Activated CD4-positive, alpha-beta memory T cell treated with anti-CD3 and anti-CD28 coated beads for 36 hours (primary cell): ENCODE measurements at regions of chr5 and their contacts with region 1.

Region 1: DNA sequence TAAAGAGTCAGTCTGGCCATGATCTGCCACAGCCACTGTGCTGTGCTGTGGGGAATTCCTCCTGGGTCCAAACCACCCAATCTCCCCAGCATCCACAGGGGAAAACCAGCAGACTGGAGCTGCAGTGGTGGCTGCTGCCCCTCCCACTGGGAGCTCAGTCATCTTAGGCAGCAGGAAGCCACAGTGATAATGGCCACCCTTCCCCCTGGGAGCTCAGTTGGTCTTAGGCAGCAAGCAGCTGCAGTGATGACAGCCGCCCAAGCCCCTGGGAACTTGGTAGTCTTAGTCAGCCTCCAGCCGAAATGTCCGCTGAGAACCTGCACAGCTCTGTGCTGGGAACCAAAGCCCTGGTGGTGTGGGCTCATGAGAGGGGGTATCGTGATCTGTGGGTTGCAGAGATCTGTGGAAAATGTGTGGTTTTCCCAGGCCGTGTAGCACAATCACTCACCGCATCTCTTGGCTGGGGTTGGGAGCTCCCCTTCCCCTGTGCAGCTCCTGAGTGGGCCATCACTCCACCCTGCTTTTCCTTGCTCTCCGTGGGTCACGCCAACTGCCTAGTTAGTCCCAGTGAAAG is 38.4 kb upstream of the SMIM15 start:
- DNase-seq: peak; percentile 10
- H3K4me3 Mint-ChIP-seq: no peak overlapping the region
- H3K27ac Mint-ChIP-seq: no peak overlapping the region
- H3K4me1 Mint-ChIP-seq: peaks cover 16% of the 10 kb centered on the region
- H3K27me3 Mint-ChIP-seq: peaks cover 41% of the 10 kb centered on the region

Region 2: GRCh38 chr5:60972231-60972630 is 228.4 kb before region 1 on chr5:
- CTCF ChIA-PET with region 1: no interaction called
- POLR2A ChIA-PET with region 1: no interaction called
- intact Hi-C with region 1: loop called (anchors 1 kb)
- DNase-seq: peak; percentile 73
- H3K4me3 Mint-ChIP-seq: no peak overlapping the region
- H3K27ac Mint-ChIP-seq: no peak overlapping the region
- H3K4me1 Mint-ChIP-seq: peaks cover 14% of the 10 kb centered on the region
- H3K27me3 Mint-ChIP-seq: no peaks in the 10 kb centered on the region

Region 3: DNA sequence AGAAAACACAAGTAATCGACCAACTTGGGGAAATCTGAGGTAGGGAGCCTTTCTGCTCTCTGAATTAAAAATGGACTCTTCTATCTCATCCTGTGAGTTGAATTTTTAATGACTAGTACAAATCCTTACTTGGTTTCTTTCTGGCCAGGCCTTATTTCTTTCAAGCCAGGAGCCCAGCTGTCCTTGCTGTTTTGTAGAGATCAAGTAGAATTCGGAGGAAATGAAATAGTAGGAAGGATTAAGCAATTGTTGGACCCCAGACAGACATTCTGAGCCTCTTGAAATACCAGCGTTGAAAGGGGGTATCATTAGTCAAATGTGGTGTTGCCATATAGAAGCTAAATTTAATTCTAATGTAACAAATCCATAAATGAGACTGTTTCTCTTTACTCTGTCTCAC is 15.3 kb after region 1 on chr5:
- CTCF ChIA-PET with region 1: no interaction called
- POLR2A ChIA-PET with region 1: no interaction called
- intact Hi-C with region 1: no loop called
- DNase-seq: no peak
- H3K4me3 Mint-ChIP-seq: no peak overlapping the region
- H3K27ac Mint-ChIP-seq: no peak overlapping the region
- H3K4me1 Mint-ChIP-seq: no peaks in the 10 kb centered on the region
- H3K27me3 Mint-ChIP-seq: peaks cover 10% of the 10 kb centered on the region

Region 4: DNA sequence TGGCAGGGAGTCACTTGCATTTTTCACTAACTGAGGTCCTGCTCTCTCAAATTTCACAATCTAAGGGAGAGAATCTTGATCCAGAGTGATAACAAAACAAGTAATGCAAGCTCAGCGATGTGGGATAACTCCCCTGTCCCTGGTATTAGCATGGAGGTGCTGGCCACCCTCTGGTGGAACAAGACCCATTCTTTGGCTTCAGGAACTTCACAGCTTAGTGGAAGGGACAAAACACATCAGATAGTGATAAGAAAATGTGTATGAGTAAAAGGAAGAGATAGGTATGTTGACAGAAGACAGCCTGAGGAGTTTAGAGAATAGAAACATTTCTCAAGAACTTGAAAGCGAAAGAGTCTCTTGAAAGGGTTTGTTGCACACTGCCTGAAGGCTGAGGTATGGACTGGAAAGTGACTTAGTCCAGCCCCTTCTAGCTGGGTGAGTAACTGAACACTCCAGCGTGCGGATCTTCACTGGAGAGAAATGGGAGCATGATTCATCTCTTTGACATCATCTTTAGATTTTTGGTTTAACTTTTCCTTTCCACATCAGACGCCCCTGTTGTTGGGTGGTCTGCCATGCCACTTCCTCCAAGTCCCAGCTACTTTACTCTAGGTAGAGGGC is 106.0 kb after region 1 on chr5:
- CTCF ChIA-PET with region 1: no interaction called
- POLR2A ChIA-PET with region 1: interaction called, 7 read pairs
- intact Hi-C with region 1: loop called (anchors 1 kb)
- DNase-seq: peak; percentile 62
- H3K4me3 Mint-ChIP-seq: no peak overlapping the region
- H3K27ac Mint-ChIP-seq: peak overlapping the region; percentile 64
- H3K4me1 Mint-ChIP-seq: peaks cover 26% of the 10 kb centered on the region
- H3K27me3 Mint-ChIP-seq: peaks cover 16% of the 10 kb centered on the region

Region 5: GRCh38 chr5:61408476-61409168 is 208.0 kb after region 1 on chr5:
- CTCF ChIA-PET with region 1: no interaction called
- POLR2A ChIA-PET with region 1: no interaction called
- intact Hi-C with region 1: loop called (anchors 1 kb)
- DNase-seq: peak; percentile 98
- H3K4me3 Mint-ChIP-seq: peak overlapping the region; percentile 55
- H3K27ac Mint-ChIP-seq: peak overlapping the region; percentile 50
- H3K4me1 Mint-ChIP-seq: peaks cover 29% of the 10 kb centered on the region
- H3K27me3 Mint-ChIP-seq: no peaks in the 10 kb centered on the region

Region 6: DNA sequence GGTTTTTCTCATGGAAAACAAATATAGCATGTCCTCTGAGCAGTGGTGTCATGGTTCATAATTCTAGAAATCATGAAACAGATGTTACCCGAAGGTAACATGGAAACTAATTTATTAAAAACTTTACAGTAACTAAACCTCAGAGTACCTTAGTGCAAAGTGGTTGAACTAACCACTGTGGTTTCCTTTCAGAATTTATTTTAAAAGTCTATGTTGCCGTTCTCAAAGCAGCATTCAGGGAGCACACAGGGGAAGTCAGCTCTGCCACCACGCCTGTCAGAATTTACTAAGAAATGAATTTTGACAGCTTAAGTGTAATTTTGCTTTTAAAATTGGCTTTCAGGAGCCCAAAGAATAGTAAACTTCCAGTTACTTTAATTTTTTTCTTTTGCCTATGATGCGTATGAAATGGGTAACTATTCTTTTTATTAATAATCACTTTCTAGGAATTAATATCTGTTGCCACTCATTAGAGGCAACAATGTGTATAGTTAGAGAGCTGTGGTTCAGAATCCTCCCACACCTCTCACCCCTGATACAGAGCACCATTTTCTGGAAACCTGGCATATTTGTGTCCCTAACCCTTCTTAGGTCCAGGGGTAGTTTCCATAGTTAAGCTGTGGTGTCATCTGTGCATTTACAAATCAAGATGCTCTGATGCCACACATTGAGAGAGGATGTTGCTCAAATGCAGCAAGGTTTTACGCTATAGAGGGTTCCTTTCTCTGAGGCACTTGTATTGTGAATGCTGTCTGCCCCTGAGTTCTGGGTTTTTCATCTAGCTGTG is 334.0 kb after region 1 on chr5:
- CTCF ChIA-PET with region 1: no interaction called
- POLR2A ChIA-PET with region 1: no interaction called
- intact Hi-C with region 1: loop called (anchors 10 kb)
- DNase-seq: peak; percentile 28
- H3K4me3 Mint-ChIP-seq: no peak overlapping the region
- H3K27ac Mint-ChIP-seq: peak overlapping the region; percentile 54
- H3K4me1 Mint-ChIP-seq: peaks cover 18% of the 10 kb centered on the region
- H3K27me3 Mint-ChIP-seq: no peaks in the 10 kb centered on the region